Activated T-helper 2 cell treated with anti-CD3 and anti-CD28 coated beads, Interferon-gamma antibody, Interleukin-2, Interleukin-4, amounts not matched to agents 10 μg/mL and 5 μg/mL and 100 μg/mL, durations not matched to agents 14 hours and 24 hours and 36 hours (primary cell): ENCODE measurements at regions of chr10 and their contacts with region 1.

Region 1: DNA sequence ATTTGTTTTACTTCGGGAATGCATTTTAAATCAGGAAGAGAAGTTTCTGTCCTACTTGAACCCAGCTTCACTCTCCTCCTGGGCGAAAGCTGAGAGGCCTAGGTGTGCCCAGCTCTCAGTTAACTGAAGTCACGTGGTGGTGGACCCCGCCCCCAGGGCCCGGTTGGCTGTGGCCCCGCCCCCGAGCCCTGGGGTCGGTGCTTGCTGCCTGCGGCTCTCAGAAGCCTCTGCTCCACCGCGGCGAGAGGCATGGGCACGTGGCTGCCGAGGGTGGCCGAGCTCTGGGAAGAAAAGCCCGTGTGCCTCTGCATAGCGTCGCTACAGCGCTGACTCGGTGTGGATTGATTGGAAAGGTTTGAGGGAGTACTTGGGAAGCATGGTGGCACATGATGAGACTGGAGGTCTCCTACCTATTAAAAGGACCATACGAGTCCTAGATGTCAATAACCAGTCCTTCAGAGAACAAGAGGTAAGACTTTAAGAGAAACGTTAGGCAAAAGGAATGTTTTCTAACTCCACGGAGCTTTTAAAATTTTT is 34.1 kb downstream of the NET1 start:
- DNase-seq: peak; percentile 83
- H3K4me3 Mint-ChIP-seq: peak overlapping the region; percentile 89
- H3K27ac Mint-ChIP-seq: peak overlapping the region; percentile 87
- H3K4me1 Mint-ChIP-seq: peaks cover 57% of the 10 kb centered on the region
- H3K27me3 Mint-ChIP-seq: no peaks in the 10 kb centered on the region

Region 2: DNA sequence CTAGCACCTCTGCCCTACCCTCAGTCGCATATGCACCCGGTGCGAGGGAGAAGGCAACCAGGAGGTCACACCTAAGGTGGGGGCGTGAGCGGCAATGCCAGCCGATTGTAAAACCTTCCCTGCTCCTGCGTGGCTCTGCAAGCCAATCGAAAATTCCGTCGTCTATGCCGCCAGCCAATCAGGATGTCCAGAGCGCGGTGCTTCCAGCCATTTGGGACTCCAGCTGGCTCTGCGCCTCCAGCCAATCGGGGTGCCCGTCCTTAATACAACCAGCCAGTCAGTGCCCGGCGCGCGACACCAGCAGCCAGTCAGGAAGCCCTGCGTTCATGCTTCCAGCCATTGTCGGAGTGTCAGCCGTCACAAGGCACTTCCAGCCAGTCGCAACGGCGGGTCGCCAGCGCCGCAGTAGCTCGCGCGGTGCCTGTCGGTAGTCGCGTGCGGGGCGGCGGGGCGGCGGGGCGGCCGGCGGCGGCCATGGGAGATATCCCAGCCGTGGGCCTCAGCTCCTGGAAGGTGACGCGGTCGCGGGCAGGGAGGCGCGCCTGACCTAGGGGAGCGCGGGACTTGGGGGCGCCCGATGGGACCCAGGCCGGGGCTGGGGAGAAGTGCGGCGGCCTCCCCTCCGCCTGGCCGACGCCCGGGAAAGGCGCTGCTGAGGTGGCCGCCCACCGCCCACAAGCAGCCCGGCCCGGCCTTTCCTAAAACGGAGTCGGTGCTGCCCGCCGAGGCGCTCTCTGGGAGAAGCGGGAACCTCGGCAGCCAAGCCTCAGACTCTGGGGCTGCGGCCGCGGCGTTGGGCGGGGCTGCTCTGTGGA is 620.4 kb before region 1 on chr10 and contains the start of gene AKR1E2:
- intact Hi-C with region 1: loop called (anchors 10 kb)
- DNase-seq: peak; percentile 82
- H3K4me3 Mint-ChIP-seq: peak within 1 kb of the TSS; percentile 82
- H3K27ac Mint-ChIP-seq: peak within 1 kb of the TSS; percentile 56
- H3K4me1 Mint-ChIP-seq: peaks cover 8% of the 10 kb centered on the region
- H3K27me3 Mint-ChIP-seq: peaks cover 35% of the 10 kb centered on the region
- total RNA-seq, gene AKR1E2: 8.3 and 10.1 TPM in 2 replicates

Region 3: DNA sequence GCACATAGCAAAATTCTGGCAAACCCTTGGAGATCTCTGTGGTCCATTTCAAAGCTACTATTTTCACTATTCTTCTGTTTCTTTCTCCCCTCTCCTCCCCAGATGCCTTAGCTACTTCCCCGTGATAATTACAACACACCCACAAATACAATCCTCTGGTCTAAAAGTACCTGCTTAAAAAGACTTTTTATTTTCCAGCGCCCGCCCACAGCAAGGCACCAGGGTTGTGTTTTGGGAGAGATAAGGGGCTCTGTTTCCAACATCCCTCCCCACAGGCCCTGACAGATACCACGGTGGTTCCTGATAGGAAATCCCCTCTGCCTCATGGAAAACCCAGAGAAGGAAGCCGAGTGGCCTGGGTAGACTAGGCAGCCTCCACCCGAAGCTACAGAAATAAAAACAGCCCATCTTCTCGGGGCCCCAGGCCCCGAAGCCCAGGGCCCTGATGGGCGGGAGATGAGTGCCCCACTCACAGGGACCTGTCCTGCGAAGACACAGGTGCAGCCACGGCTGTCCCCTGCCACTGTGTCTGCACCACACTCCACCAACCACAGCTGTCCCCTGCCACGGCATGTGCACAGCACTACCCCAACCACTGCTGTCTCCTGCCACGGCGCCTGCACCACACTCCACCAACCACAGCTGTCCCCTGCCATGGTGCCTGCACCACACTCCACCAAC is 33.2 kb after region 1 on chr10:
- intact Hi-C with region 1: no loop called
- DNase-seq: no peak
- H3K4me3 Mint-ChIP-seq: no peak overlapping the region
- H3K27ac Mint-ChIP-seq: no peak overlapping the region
- H3K4me1 Mint-ChIP-seq: peaks cover 4% of the 10 kb centered on the region
- H3K27me3 Mint-ChIP-seq: no peaks in the 10 kb centered on the region

Region 4: GRCh38 chr10:5548527-5549223 is 102.2 kb after region 1 on chr10:
- intact Hi-C with region 1: loop called (anchors 1 kb)
- DNase-seq: peak; percentile 69
- H3K4me3 Mint-ChIP-seq: no peak overlapping the region
- H3K27ac Mint-ChIP-seq: no peak overlapping the region
- H3K4me1 Mint-ChIP-seq: peaks cover 30% of the 10 kb centered on the region
- H3K27me3 Mint-ChIP-seq: peaks cover 4% of the 10 kb centered on the region

Region 5: DNA sequence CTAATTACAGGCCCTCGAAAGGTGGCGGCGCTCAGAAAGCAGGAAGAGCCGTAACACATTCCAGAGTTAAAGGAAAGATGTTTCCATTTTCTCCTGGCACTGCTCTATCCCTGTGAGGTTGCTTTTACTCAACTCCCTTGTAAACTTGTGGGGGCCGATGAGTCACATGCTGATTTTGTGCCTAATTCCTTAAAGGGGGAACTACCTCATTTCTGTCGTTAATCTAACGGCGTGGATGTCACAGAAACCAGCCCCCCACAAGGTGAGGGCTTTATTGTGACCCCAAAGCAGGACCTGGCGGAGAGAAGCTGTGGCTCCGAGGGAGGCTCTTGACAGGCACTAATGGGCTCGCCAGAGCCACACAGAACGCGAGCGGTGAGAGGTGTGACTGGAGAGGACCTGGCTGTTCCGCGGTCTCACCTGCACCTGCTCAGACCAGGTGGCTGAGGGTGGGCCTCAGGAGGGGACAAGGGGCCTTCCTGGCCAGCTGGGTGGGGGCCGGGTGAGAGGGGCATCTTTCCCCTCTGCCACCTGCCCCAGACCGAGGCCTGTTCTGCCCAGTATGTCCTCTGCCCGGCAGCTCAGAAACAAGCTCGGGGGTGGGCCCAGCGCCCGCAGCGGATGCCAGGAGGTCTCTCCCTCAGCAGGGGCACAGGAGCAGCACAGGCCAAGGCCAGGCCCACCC is 129.2 kb after region 1 on chr10:
- intact Hi-C with region 1: no loop called
- DNase-seq: no peak
- H3K4me3 Mint-ChIP-seq: no peak overlapping the region
- H3K27ac Mint-ChIP-seq: no peak overlapping the region
- H3K4me1 Mint-ChIP-seq: no peaks in the 10 kb centered on the region
- H3K27me3 Mint-ChIP-seq: peaks cover 5% of the 10 kb centered on the region

Region 6: GRCh38 chr10:5629303-5630111 is 183.0 kb after region 1 on chr10:
- intact Hi-C with region 1: loop called (anchors 2 kb)
- DNase-seq: peak; percentile 79
- H3K4me3 Mint-ChIP-seq: no peak overlapping the region
- H3K27ac Mint-ChIP-seq: peak overlapping the region; percentile 83
- H3K4me1 Mint-ChIP-seq: peaks cover 19% of the 10 kb centered on the region
- H3K27me3 Mint-ChIP-seq: peaks cover 2% of the 10 kb centered on the region

Region 7: GRCh38 chr10:5813287-5814109 is 367.0 kb after region 1 on chr10 and contains the start of gene GDI2:
- intact Hi-C with region 1: loop called (anchors 10 kb)
- DNase-seq: peak; percentile 96
- H3K4me3 Mint-ChIP-seq: peak within 1 kb of the TSS; percentile 99
- H3K27ac Mint-ChIP-seq: peak within 1 kb of the TSS; percentile 89
- H3K4me1 Mint-ChIP-seq: peaks cover 51% of the 10 kb centered on the region
- H3K27me3 Mint-ChIP-seq: no peaks in the 10 kb centered on the region
- total RNA-seq, gene GDI2: 301 and 302 TPM in 2 replicates

Region 8: GRCh38 chr10:5889624-5890451 is 443.4 kb after region 1 on chr10 and contains the starts of genes ANKRD16 and FBH1:
- intact Hi-C with region 1: loop called (anchors 5 kb)
- DNase-seq: peak; percentile 98
- H3K4me3 Mint-ChIP-seq: peak within 1 kb of the TSS; percentile 94
- H3K27ac Mint-ChIP-seq: peak within 1 kb of the TSS; percentile 79
- H3K4me1 Mint-ChIP-seq: peaks cover 41% of the 10 kb centered on the region
- H3K27me3 Mint-ChIP-seq: no peaks in the 10 kb centered on the region
- total RNA-seq, gene ANKRD16: 10.4 and 11.6 TPM in 2 replicates
- total RNA-seq, gene FBH1: 57.2 and 58.0 TPM in 2 replicates